ENCODE measurements at regions of chr12 and their contacts with region 1.

Region 1: GRCh38 chr12:108193917-108194316 is 64.8 kb downstream of the WSCD2 start:
- DNase-seq: no peak
- H3K4me3 ChIP-seq: no peak overlapping the region
- H3K27ac ChIP-seq: no peak overlapping the region
- H3K4me1 ChIP-seq: peaks cover 0 to 5% of the 10 kb centered on the region in 2 donors
- H3K27me3 ChIP-seq: no peaks in the 10 kb centered on the region
- CTCF ChIP-seq: peak; percentile 49 to 75 (median 60)

Region 2: GRCh38 chr12:107992870-107993451 is 201.0 kb before region 1 on chr12:
- intact Hi-C with region 1: loop called (anchors 2 kb)
- DNase-seq: no peak
- H3K4me3 ChIP-seq: no peak overlapping the region
- H3K27ac ChIP-seq: no peak overlapping the region
- H3K4me1 ChIP-seq: no peaks in the 10 kb centered on the region
- H3K27me3 ChIP-seq: no peaks in the 10 kb centered on the region
- CTCF ChIP-seq: peak in 2 of 3 experiments; percentile 19 to 35

Region 3: GRCh38 chr12:108029051-108029835 is 164.7 kb before region 1 on chr12:
- intact Hi-C with region 1: no loop called
- DNase-seq: no peak
- H3K4me3 ChIP-seq: no peak overlapping the region
- H3K27ac ChIP-seq: no peak overlapping the region
- H3K4me1 ChIP-seq: no peaks in the 10 kb centered on the region
- H3K27me3 ChIP-seq: no peaks in the 10 kb centered on the region
- CTCF ChIP-seq: no peak

Region 4: GRCh38 chr12:108099073-108099472 is 94.8 kb before region 1 on chr12:
- intact Hi-C with region 1: loop called (anchors 1 kb)
- DNase-seq: no peak
- H3K4me3 ChIP-seq: no peak overlapping the region
- H3K27ac ChIP-seq: no peak overlapping the region
- H3K4me1 ChIP-seq: no peaks in the 10 kb centered on the region
- H3K27me3 ChIP-seq: no peaks in the 10 kb centered on the region
- CTCF ChIP-seq: peak; percentile 29 to 60 (median 35)

Region 5: DNA sequence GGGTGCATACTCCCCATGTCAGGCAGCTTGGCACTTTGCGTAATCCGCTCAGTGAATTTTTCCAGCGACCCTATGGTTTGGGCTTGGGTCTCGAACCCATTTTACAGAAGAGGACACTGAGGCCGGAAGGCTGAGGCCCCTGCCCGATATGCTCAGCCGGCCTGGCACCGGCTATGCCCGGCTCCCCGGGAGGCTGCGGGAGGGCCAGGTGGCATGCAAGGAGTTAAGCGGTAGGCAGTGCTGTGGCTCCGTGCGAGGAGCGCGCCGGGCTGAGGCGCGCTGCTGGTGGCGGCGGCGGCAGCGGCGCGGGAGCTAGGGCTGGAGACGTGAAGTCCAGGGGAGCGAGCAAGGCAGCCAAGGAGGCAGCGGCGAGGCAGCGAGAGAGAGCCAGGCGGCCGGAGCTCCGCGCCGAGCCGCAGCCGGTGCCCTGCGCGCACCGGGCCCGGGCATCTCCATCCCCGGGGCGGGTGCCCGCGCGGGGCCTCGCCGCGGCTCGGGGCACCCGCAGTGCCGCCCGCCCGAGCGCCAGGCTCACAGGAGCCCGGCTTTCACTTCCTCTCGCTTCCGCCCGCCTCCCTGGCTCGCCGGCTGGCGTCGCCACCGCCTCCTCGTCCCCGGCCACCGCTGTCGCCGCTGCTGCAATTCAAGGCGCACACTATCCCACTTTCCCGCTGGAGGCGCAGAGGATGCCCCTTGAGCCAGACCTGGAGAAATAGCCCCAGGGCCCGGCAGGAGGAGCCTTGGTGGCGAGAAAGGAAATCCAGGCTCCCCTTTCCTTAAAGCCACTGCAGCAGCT is 64.7 kb before region 1 on chr12 and contains the start of gene WSCD2:
- intact Hi-C with region 1: loop called (anchors 5 kb)
- DNase-seq: peak; percentile 12 to 80
- H3K4me3 ChIP-seq: peak within 1 kb of the TSS; percentile 56 to 82
- H3K27ac ChIP-seq: peak within 1 kb of the TSS; percentile 81
- H3K4me1 ChIP-seq: peaks cover 10% of the 10 kb centered on the region in 2 donors
- H3K27me3 ChIP-seq: no peaks in the 10 kb centered on the region
- CTCF ChIP-seq: peak in 2 of 3 experiments; percentile 49 to 50
- total RNA-seq, gene WSCD2: 3.5 TPM

Measured in ascending aorta (tissue), 2 donors.